ENCODE measurements at regions of chr5 and their contacts with region 1.

Region 1: GRCh38 chr5:96807075-96807654 is 580 bp downstream of the ERAP1 start:
- DNase-seq: no peak
- ATAC-seq: peak; percentile 65
- H3K4me3 ChIP-seq: peak overlapping the region; percentile 76
- H3K27ac ChIP-seq: peak overlapping the region; percentile 95
- H3K4me1 ChIP-seq: peaks cover 3% of the 10 kb centered on the region
- H3K27me3 ChIP-seq: no peaks in the 10 kb centered on the region
- CTCF ChIP-seq: no peak
- EP300 ChIP-seq: no peak
- POLR2A ChIP-seq: no peak
- RAD21 ChIP-seq: 0 out of 2 replicates have a peak, but pooled peaks have one; percentile 2

Region 2: DNA sequence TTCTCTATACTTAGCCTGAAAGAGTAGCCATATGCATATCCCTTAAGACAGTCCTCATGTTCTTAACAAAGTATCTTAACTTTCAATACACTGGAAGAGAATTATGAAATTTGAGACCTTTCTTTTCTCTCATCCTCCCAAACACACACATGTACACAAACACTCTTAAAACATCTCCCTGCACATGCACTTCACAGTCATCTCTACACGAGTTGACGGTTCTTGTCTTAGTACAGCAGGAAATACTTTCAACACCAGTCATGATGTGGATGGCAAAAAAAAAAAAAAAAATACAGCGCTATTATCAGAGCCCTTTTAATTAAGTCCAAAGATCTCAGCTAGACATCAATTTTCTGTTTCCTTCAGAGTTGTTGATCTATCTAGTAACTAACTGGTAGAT is 330.5 kb before region 1 on chr5:
- CTCF ChIA-PET with region 1: no interaction called
- POLR2A ChIA-PET with region 1: no interaction called
- RAD21 ChIA-PET with region 1: no interaction called
- SMC1A ChIA-PET with region 1: no interaction called
- in situ Hi-C with region 1: no loop called
- intact Hi-C with region 1: no loop called
- DNase-seq: no peak
- ATAC-seq: no peak
- H3K4me3 ChIP-seq: no peak overlapping the region
- H3K27ac ChIP-seq: no peak overlapping the region
- H3K4me1 ChIP-seq: no peaks in the 10 kb centered on the region
- H3K27me3 ChIP-seq: no peaks in the 10 kb centered on the region
- CTCF ChIP-seq: no peak
- EP300 ChIP-seq: no peak
- POLR2A ChIP-seq: no peak
- RAD21 ChIP-seq: no peak

Region 3: GRCh38 chr5:96714951-96715451 is 92.2 kb before region 1 on chr5:
- CTCF ChIA-PET with region 1: no interaction called
- POLR2A ChIA-PET with region 1: no interaction called
- RAD21 ChIA-PET with region 1: no interaction called
- SMC1A ChIA-PET with region 1: no interaction called
- in situ Hi-C with region 1: no loop called
- intact Hi-C with region 1: no loop called
- DNase-seq: no peak
- ATAC-seq: peak; percentile 85
- H3K4me3 ChIP-seq: no peak overlapping the region
- H3K27ac ChIP-seq: no peak overlapping the region
- H3K4me1 ChIP-seq: no peaks in the 10 kb centered on the region
- H3K27me3 ChIP-seq: no peaks in the 10 kb centered on the region
- CTCF ChIP-seq: no peak
- EP300 ChIP-seq: 0 out of 4 replicates have a peak, but pooled peaks of 1 of the 2 experiments have one; percentile 32
- POLR2A ChIP-seq: no peak
- RAD21 ChIP-seq: no peak

Region 4: DNA sequence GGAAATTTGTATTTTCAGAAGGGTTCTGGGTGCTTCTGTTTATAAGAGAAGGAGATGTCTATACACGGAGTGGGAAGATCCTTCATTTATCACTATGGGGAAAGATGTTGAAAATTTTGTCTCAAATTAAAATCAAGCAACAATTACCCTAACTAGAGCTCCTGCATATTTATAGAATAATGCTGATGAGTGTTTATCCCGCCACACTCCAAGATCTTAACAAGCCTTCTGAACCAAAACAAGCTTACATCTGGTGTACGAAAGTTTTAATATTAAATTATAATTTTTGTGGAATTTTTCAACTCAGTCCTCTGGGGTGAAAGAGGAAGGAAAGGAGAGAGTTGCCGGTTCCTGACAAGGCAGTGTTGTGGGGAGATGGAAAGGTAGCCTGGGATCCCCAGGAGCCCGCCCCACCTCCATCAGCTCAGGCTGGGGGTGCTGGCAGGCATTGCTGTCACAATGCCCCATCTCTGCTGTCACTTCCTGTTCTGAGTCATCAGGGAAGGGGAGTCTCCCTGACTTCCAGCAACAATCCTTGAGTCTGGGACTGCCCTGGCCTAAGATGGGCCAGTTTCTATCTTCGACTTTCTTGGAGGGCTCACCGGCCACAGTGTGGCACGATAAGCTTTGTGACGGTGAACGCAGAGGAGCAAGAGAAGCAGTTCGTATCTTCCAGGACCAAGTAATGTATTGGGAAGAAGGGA is 63.9 kb before region 1 on chr5:
- CTCF ChIA-PET with region 1: no interaction called
- POLR2A ChIA-PET with region 1: no interaction called
- RAD21 ChIA-PET with region 1: no interaction called
- SMC1A ChIA-PET with region 1: no interaction called
- in situ Hi-C with region 1: no loop called
- intact Hi-C with region 1: no loop called
- DNase-seq: no peak
- ATAC-seq: no peak
- H3K4me3 ChIP-seq: no peak overlapping the region
- H3K27ac ChIP-seq: no peak overlapping the region
- H3K4me1 ChIP-seq: no peaks in the 10 kb centered on the region
- H3K27me3 ChIP-seq: no peaks in the 10 kb centered on the region
- CTCF ChIP-seq: no peak
- EP300 ChIP-seq: no peak
- POLR2A ChIP-seq: no peak
- RAD21 ChIP-seq: no peak

Region 5: DNA sequence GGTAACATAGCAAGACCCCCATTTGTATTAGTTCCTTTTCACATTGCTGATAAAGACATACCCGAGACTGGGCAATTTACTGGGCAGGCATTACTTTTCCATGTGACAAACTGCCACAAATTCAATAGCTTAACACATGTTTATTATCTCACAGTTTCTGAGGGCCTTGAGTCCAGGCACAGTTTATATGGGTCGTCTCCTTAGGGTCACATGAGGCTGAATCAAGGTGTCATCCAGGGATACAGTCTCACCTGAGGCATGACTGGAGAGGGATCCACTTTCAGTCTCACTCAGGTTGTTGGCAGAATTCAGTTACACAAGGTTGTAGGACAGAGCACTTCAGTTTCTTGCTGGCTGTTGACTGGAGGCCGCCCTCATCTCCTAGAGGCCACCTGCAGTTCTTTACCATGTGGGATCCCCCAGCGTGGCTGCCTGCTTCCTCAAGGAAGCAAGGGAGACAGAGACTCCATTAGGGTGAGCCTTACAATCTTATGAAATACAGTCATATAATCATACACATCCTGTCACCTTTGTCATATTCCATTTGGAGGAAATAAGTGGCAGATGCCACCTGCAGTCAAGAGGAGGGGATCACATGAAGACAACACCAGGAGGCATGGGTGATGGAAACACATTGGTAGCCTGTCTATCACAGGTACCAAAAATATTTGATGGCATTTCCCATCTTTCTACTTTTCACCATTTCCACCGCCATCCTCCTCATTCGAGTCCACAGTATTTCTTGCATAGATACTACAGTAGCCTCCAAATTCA is 15.7 kb after region 1 on chr5:
- CTCF ChIA-PET with region 1: interaction called, 17 read pairs
- POLR2A ChIA-PET with region 1: interaction called, 18 read pairs
- RAD21 ChIA-PET with region 1: interaction called, 3 read pairs
- SMC1A ChIA-PET with region 1: interaction called, 24 read pairs
- in situ Hi-C with region 1: no loop called
- intact Hi-C with region 1: no loop called
- DNase-seq: no peak
- ATAC-seq: no peak; the same call in 2 of the 3 replicates
- H3K4me3 ChIP-seq: no peak overlapping the region
- H3K27ac ChIP-seq: no peak overlapping the region
- H3K4me1 ChIP-seq: no peaks in the 10 kb centered on the region
- H3K27me3 ChIP-seq: no peaks in the 10 kb centered on the region
- CTCF ChIP-seq: peak in 1 of 3 experiments; percentile 5; a peak in 1 of 6 replicates
- EP300 ChIP-seq: no peak
- POLR2A ChIP-seq: no peak
- RAD21 ChIP-seq: no peak

Region 6: DNA sequence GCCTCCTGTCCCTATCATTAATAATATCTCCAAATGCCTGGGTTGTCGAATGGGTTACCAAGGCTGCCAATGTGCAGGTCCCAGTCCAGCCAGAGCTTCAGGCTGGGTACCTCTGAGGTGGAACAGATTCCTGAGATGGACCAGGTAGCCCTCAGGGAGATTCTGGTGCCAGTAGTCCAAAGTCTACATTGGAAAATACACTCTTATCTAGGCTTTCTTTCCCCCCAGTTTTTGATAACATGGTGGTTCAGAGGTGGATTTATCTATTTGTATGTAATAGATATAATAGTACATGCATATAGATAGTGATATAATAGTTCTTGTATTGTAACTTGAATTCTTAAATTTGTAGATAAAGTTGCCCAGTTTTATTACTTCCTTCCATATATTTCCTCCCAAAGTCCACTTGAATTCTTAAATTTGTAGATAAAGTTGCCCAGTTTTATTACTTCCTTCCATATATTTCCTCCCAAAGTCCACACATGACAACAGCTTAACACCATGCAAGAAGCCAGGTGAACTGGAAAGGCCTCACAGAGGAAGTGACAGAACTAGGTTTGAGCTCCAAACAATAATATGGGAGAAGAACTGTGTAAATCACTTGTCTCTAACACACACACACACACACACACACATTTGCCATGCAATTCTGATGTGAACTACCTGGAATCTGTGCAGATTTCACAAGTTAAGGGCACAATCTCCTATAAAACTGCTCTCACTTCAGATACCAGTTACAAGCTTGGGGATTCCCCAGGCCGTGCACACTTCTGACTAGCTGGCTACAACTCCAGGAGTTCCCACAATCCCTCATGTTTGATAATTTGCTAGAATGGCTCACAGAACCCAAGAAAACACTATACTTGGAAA is 31.3 kb after region 1 on chr5:
- CTCF ChIA-PET with region 1: interaction called, 3 read pairs
- POLR2A ChIA-PET with region 1: interaction called, 13 read pairs
- RAD21 ChIA-PET with region 1: interaction called, 4 read pairs
- SMC1A ChIA-PET with region 1: interaction called, 11 read pairs
- in situ Hi-C with region 1: no loop called
- intact Hi-C with region 1: no loop called
- DNase-seq: no peak
- ATAC-seq: peak; percentile 37; the same call in 2 of the 3 replicates
- H3K4me3 ChIP-seq: no peak overlapping the region
- H3K27ac ChIP-seq: no peak overlapping the region
- H3K4me1 ChIP-seq: peaks cover 5% of the 10 kb centered on the region; the same call in 1 of the 2 replicates
- H3K27me3 ChIP-seq: no peaks in the 10 kb centered on the region
- CTCF ChIP-seq: no peak
- EP300 ChIP-seq: no peak
- POLR2A ChIP-seq: no peak
- RAD21 ChIP-seq: no peak

Region 7: GRCh38 chr5:96876292-96876850 is 69.2 kb after region 1 on chr5 and contains the start of gene ERAP2:
- CTCF ChIA-PET with region 1: interaction called, 50 read pairs
- POLR2A ChIA-PET with region 1: interaction called, 21 read pairs
- RAD21 ChIA-PET with region 1: interaction called, 14 read pairs
- SMC1A ChIA-PET with region 1: interaction called, 9 read pairs
- in situ Hi-C with region 1: no loop called
- intact Hi-C with region 1: no loop called
- DNase-seq: no peak
- ATAC-seq: peak; percentile 58
- H3K4me3 ChIP-seq: peak within 1 kb of the TSS; percentile 86
- H3K27ac ChIP-seq: peak within 1 kb of the TSS; percentile 86
- H3K4me1 ChIP-seq: peaks cover 33% of the 10 kb centered on the region
- H3K27me3 ChIP-seq: no peaks in the 10 kb centered on the region
- CTCF ChIP-seq: no peak
- EP300 ChIP-seq: peak in 1 of 2 experiments; percentile 35; a peak in 1 of 4 replicates
- POLR2A ChIP-seq: no peak
- RAD21 ChIP-seq: no peak
- polyA plus RNA-seq, gene ERAP2: 4.0 to 4.3 TPM